ENCODE measurements at regions of chr12 and their contacts with region 1.

Region 1: GRCh38 chr12:48795480-48796455 is 6.9 kb upstream of the ADCY6 start:
- DNase-seq: peak in 2 of 3 donors; percentile 58 to 73
- H3K4me3 ChIP-seq: peak overlapping the region in 1 of 7 experiments; percentile 40
- H3K27ac ChIP-seq: no peak overlapping the region
- H3K4me1 ChIP-seq: peaks cover 0 to 4% (median 1%) of the 10 kb centered on the region in 4 experiments
- H3K27me3 ChIP-seq: peaks cover 0 to 5% (median 0%) of the 10 kb centered on the region in 5 experiments

Region 2: GRCh38 chr12:48750769-48751735 is 44.7 kb before region 1 on chr12:
- CTCF ChIA-PET with region 1: interaction called, 218 read pairs
- POLR2A ChIA-PET with region 1: no interaction called
- DNase-seq: no peak
- H3K4me3 ChIP-seq: no peak overlapping the region
- H3K27ac ChIP-seq: no peak overlapping the region
- H3K4me1 ChIP-seq: no peaks in the 10 kb centered on the region
- H3K27me3 ChIP-seq: no peaks in the 10 kb centered on the region

Region 3: DNA sequence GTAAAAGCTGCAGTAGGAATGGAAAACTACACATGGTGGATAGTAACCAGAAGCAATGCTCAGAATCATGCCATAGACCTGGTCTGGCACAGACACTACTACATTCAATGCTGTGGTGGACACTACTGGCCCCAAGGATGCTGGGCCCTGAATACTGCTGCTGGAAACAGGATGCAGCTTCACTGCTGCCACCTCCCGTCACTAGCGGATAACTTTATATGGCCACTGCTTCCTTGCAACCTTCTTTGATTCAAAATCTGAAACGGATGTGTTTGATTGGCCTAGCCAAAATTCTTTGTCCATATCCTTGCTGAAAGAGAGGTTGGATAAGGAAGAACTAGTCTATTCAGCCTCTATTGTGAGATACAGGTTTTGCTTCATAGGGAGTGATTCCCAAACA is 37.5 kb before region 1 on chr12:
- CTCF ChIA-PET with region 1: interaction called, 218 read pairs
- POLR2A ChIA-PET with region 1: interaction called, 3 read pairs
- DNase-seq: peak in 2 of 3 donors; percentile 19 to 31
- H3K4me3 ChIP-seq: no peak overlapping the region
- H3K27ac ChIP-seq: no peak overlapping the region
- H3K4me1 ChIP-seq: peaks cover 0 to 3% (median 2%) of the 10 kb centered on the region in 4 experiments
- H3K27me3 ChIP-seq: no peaks in the 10 kb centered on the region

Region 4: DNA sequence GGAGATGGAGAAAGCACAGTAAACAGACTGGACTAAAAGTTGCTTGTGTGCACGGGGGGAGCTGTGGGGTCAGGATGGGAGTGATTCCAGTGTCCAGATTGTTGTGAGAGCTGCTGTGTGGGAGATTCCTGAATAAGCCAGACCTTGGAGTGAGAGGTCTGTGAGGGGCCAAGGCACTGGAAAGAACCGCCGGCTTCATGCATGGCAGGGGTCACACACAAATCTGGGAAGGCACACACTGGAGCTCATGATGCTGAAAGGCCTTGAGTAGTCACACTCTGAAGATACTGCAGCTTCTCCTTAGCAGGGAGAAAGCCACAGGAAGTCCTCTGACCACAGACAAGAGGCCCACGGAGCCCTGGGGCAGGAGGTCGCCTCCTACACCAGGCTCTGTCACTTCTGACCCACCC is 30.0 kb before region 1 on chr12:
- CTCF ChIA-PET with region 1: interaction called, 119 read pairs
- POLR2A ChIA-PET with region 1: no interaction called
- DNase-seq: peak; percentile 22 to 69 (median 67)
- H3K4me3 ChIP-seq: peak overlapping the region in 2 of 7 experiments; percentile 12 to 26
- H3K27ac ChIP-seq: peak overlapping the region in 1 of 2 experiments; percentile 15
- H3K4me1 ChIP-seq: peaks cover 4 to 47% (median 19%) of the 10 kb centered on the region in 4 experiments
- H3K27me3 ChIP-seq: no peaks in the 10 kb centered on the region

Region 5: DNA sequence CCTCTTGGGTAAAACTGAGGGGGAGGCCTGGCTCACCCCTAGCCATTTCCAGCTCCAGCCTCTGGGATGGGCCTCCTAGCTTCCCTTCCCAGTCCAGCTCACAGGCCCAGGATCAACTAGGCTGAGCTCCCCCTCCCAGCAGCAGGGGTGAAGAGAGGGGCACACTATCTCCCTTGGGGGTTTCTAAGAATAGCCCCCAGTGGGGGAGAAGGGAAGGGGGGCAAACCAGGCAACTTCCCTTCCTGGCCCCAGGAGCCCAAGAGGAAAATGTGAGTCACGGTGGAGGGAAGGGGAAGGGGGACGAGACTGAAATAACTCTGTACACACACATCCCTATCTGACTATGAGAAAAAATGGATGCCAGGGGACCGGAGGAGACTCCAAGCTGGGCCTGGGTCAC is 15.9 kb before region 1 on chr12:
- CTCF ChIA-PET with region 1: interaction called, 119 read pairs
- POLR2A ChIA-PET with region 1: interaction called, 3 read pairs
- DNase-seq: peak; percentile 44 to 71 (median 68)
- H3K4me3 ChIP-seq: peak overlapping the region in 4 of 7 experiments; percentile 16 to 46 (median 33)
- H3K27ac ChIP-seq: peak overlapping the region in 1 of 2 experiments; percentile 32
- H3K4me1 ChIP-seq: peaks cover 0 to 28% (median 25%) of the 10 kb centered on the region in 4 experiments
- H3K27me3 ChIP-seq: no peaks in the 10 kb centered on the region

Region 6: DNA sequence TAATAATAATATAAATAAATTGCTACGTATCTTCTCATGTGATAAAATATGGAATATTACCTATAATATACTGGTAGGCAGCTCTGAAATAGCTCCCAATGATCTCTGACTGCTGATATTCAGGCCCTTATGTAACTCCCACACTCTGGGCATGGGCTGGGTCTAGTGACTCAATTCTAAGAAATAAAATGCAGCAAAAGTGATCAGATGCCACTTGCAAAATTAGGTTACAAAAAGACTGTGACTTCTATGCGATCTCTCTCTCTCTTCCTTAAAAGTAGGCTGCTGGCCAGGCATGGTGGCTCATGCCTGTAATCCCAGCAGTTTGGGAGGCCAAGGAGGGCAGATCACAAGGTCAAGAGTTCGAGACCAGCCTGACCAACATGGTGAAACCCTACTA is 12.2 kb after region 1 on chr12:
- CTCF ChIA-PET with region 1: interaction called, 40 read pairs
- POLR2A ChIA-PET with region 1: no interaction called
- DNase-seq: no peak
- H3K4me3 ChIP-seq: no peak overlapping the region
- H3K27ac ChIP-seq: no peak overlapping the region
- H3K4me1 ChIP-seq: peaks cover 0 to 12% (median 8%) of the 10 kb centered on the region in 4 experiments
- H3K27me3 ChIP-seq: no peaks in the 10 kb centered on the region

Region 7: DNA sequence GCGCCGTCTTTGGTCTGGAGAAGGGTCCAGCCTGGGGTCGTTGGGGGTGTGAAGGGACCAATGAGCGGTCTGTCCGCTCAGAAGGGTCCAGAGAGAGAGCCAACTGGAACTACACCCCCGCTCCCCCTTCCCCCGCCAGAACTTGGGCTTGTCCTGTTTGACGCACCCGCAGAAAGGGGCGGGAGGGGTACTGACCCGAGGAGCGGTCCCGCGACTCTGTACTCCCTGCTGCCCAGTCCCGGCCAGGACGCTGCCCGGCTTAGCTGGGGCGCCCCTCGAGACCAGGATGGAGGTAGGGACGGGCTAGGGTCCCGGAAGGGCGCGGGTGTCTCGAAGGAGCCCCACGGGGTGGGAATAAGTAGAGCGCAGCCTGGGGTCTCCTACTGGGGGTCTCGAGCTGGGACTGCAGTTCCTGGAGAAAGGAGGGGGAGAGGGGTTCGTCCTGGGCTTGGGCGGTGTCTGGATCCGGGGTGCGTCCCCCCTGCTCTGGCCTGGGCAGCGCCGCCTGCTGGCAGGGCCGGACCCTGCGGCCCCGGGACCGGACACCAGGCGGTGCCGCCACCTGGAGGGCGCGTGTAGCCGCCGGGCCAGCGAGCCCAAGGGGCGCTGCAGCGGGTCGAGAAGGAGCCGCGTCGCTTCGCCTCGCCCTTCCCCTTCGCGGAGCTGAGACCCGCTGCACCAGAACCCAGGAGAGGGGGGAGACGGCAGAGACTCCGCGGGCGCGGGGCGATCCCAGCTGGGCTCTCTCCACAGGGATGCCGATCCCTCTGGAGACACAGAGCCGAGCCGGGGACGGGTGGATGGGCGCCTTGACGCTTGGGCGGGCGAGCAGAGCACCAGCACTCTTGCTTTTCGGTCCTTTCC is 18.7 kb after region 1 on chr12:
- CTCF ChIA-PET with region 1: interaction called, 40 read pairs
- POLR2A ChIA-PET with region 1: interaction called, 3 read pairs
- DNase-seq: peak; percentile 80 to 85 (median 82)
- H3K4me3 ChIP-seq: peak overlapping the region; percentile 72 to 88 (median 79)
- H3K27ac ChIP-seq: peak overlapping the region in 1 of 2 experiments; percentile 58
- H3K4me1 ChIP-seq: peaks cover 0 to 44% (median 36%) of the 10 kb centered on the region in 4 experiments
- H3K27me3 ChIP-seq: peaks cover 0 to 9% (median 0%) of the 10 kb centered on the region in 5 experiments

Measured in common myeloid progenitor, CD34-positive (primary cell).